ENCODE measurements at regions of chr12 and their contacts with region 1.

Region 1: GRCh38 chr12:95959107-95959506 is 16.0 kb downstream of the AMDHD1 start:
- DNase-seq: no peak
- H3K4me3 ChIP-seq: no peak overlapping the region
- H3K27ac ChIP-seq: no peak overlapping the region
- H3K4me1 ChIP-seq: peaks cover 2 to 5% (median 2%) of the 10 kb centered on the region in 4 experiments; a peak in 4 of 7 replicates
- H3K27me3 ChIP-seq: no peaks in the 10 kb centered on the region
- CTCF ChIP-seq: peak in 2 of 3 experiments; percentile 38 to 41; a peak in 3 of 4 replicates
- EP300 ChIP-seq: no peak
- POLR2A ChIP-seq: no peak
- RAD21 ChIP-seq: peak; percentile 58 to 68

Region 2: DNA sequence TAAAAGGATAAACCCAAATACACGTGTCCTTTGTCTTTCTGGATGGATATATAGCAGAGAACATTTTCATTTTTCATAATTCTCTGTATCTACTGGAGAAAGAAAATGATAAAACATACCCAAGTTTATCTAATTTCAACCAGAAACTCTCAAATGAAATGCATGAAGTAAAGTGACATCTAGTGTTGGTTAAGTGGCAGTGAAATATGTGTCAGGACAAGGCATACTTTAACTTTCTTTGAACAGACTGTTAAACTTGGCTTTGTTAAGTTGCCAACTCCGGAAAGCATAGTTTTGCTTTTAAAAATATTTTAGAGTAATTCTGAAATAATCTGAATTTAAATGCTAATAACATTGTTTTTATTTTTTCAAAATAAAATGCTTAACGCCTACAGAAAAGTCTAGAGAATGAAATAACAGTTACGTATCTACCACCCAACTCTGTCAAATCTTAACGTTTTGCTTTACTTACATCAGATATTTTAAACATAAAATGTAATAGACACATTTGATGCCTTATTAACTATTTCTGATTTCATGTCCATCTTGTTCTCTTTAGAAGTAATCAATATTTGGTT is 143.4 kb before region 1 on chr12:
- CTCF ChIA-PET with region 1: interaction called, 19 read pairs
- POLR2A ChIA-PET with region 1: no interaction called
- DNase-seq: no peak
- H3K4me3 ChIP-seq: no peak overlapping the region
- H3K27ac ChIP-seq: no peak overlapping the region
- H3K4me1 ChIP-seq: no peaks in the 10 kb centered on the region
- H3K27me3 ChIP-seq: no peaks in the 10 kb centered on the region
- CTCF ChIP-seq: peak in 2 of 3 experiments; percentile 43 to 67; a peak in 2 of 4 replicates
- EP300 ChIP-seq: no peak
- POLR2A ChIP-seq: no peak
- RAD21 ChIP-seq: peak; percentile 79

Region 3: GRCh38 chr12:95918194-95918993 is 40.7 kb before region 1 on chr12:
- CTCF ChIA-PET with region 1: interaction called, 84 read pairs
- POLR2A ChIA-PET with region 1: no interaction called
- DNase-seq: peak in 1 of 2 experiments; percentile 52
- H3K4me3 ChIP-seq: no peak overlapping the region
- H3K27ac ChIP-seq: no peak overlapping the region
- H3K4me1 ChIP-seq: no peaks in the 10 kb centered on the region
- H3K27me3 ChIP-seq: no peaks in the 10 kb centered on the region
- CTCF ChIP-seq: peak; percentile 59 to 98 (median 87)
- EP300 ChIP-seq: no peak
- POLR2A ChIP-seq: no peak
- RAD21 ChIP-seq: peak; percentile 92 to 94

Region 4: DNA sequence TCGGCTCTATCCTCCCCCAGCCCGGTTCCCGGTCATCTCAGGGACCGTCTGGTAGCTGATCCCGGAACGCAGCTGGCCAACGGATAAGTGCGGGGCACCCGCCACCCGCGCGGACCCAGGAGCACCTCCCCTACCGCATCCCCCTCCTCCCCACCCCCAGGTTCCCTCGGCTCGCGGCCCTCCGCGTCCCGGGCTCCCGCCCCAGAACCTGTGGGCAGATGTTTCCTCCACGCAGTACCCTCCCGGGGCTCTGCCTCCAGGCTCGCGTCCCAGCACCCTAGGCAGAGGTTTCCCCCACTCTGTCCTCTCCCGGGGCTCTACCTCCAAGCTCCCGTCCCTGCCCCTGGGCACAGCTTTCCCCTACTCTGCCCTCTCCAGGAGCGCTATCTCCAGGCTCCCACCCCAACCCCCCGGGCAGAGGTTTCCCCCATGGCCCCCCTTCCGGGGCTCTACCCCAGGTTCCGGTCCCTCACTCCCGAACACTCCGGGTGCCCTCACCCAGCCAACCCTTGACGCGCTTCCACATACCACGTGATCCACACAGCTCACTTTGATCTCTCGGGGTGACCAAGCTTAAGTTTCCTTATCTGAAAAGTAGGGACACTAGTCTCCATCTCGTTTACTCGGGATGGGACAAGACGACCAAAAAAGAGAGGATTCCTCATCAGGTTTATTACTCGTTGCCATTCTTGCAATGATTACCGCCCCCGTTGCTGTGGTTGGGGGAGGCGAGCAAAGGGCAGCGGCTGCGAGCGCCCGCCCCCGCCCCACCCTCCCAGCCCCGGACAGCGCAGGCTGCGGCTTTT is 16.4 kb before region 1 on chr12 and contains the start of gene CCDC38:
- CTCF ChIA-PET with region 1: interaction called, 123 read pairs
- POLR2A ChIA-PET with region 1: interaction called, 8 read pairs
- DNase-seq: peak in 1 of 2 experiments; percentile 84
- H3K4me3 ChIP-seq: peak within 1 kb of the TSS; percentile 59 to 95 (median 74)
- H3K27ac ChIP-seq: no peak within 1 kb of the TSS
- H3K4me1 ChIP-seq: peaks cover 0 to 4% (median under 1%) of the 10 kb centered on the region in 4 experiments; a peak in 3 of 7 replicates
- H3K27me3 ChIP-seq: peaks cover 0 to 11% (median 10%) of the 10 kb centered on the region in 4 experiments; a peak in 5 of 7 replicates
- CTCF ChIP-seq: no peak
- EP300 ChIP-seq: no peak
- POLR2A ChIP-seq: peak in 1 of 2 experiments; percentile 28; a peak in 1 of 3 replicates
- RAD21 ChIP-seq: no peak
- total RNA-seq, gene CCDC38: not detected in 2 replicates

Region 5: GRCh38 chr12:95970905-95971304 is 11.8 kb after region 1 on chr12:
- CTCF ChIA-PET with region 1: interaction called, 29 read pairs
- POLR2A ChIA-PET with region 1: interaction called, 3 read pairs
- DNase-seq: peak in 1 of 2 experiments; percentile 72
- H3K4me3 ChIP-seq: peak overlapping the region in 1 of 4 experiments; percentile 4; a peak in 1 of 8 replicates
- H3K27ac ChIP-seq: no peak overlapping the region
- H3K4me1 ChIP-seq: peaks cover 0 to 10% (median 5%) of the 10 kb centered on the region in 4 experiments; a peak in 6 of 7 replicates
- H3K27me3 ChIP-seq: no peaks in the 10 kb centered on the region
- CTCF ChIP-seq: no peak
- EP300 ChIP-seq: no peak
- POLR2A ChIP-seq: no peak
- RAD21 ChIP-seq: no peak

Region 6: GRCh38 chr12:95982602-95983001 is 23.5 kb after region 1 on chr12:
- CTCF ChIA-PET with region 1: no interaction called
- POLR2A ChIA-PET with region 1: no interaction called
- DNase-seq: no peak
- H3K4me3 ChIP-seq: no peak overlapping the region
- H3K27ac ChIP-seq: no peak overlapping the region
- H3K4me1 ChIP-seq: peaks cover 0 to 8% (median 4%) of the 10 kb centered on the region in 4 experiments; a peak in 5 of 7 replicates
- H3K27me3 ChIP-seq: no peaks in the 10 kb centered on the region
- CTCF ChIP-seq: no peak
- EP300 ChIP-seq: no peak
- POLR2A ChIP-seq: no peak
- RAD21 ChIP-seq: no peak